ENCODE measurements at regions of chr6 and their contacts with region 1.

Region 1: DNA sequence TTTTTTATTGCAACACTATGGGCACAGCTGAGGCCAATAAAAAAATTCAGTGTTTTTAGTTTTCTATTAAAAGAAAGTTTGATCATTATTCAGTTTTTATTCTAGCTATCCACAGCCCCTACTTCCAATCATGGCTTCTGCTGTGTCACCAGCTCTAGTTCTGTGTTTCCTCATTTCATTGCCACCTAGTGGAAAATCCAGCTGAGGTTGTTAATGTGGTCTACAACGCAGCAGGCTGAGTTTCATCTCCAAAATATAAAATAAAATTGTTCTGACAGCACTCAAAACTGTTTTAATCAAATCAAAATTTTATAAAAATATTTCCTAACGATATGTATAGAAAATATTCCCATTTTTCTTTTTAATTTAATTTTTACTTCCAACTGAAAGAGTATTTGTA is 13.6 kb downstream of the COL9A1 start:
- DNase-seq: no peak
- ATAC-seq: peak; percentile 75
- H3K4me3 ChIP-seq: no peak overlapping the region
- H3K27ac ChIP-seq: no peak overlapping the region
- H3K4me1 ChIP-seq: no peaks in the 10 kb centered on the region
- H3K27me3 ChIP-seq: peaks cover 14% of the 10 kb centered on the region; the same call in 1 of the 2 replicates
- CTCF ChIP-seq: peak; percentile 29; the same call in 1 of the 2 replicates

Region 2: GRCh38 chr6:70221025-70221714 is 68.1 kb before region 1 on chr6:
- CTCF ChIA-PET with region 1: interaction called, 18 read pairs
- POLR2A ChIA-PET with region 1: no interaction called
- intact Hi-C with region 1: loop called (anchors 1 kb)
- DNase-seq: peak; percentile 36
- ATAC-seq: no peak
- H3K4me3 ChIP-seq: no peak overlapping the region
- H3K27ac ChIP-seq: no peak overlapping the region
- H3K4me1 ChIP-seq: no peaks in the 10 kb centered on the region
- H3K27me3 ChIP-seq: peaks cover 15% of the 10 kb centered on the region
- CTCF ChIP-seq: peak; percentile 55

Region 3: GRCh38 chr6:70270287-70271005 is 18.9 kb before region 1 on chr6:
- CTCF ChIA-PET with region 1: no interaction called
- POLR2A ChIA-PET with region 1: no interaction called
- intact Hi-C with region 1: no loop called
- DNase-seq: peak; percentile 38
- ATAC-seq: peak; percentile 71
- H3K4me3 ChIP-seq: no peak overlapping the region
- H3K27ac ChIP-seq: no peak overlapping the region
- H3K4me1 ChIP-seq: no peaks in the 10 kb centered on the region
- H3K27me3 ChIP-seq: 0 out of 2 replicates have a peak, but pooled peaks cover 7% of the 10 kb centered on the region
- CTCF ChIP-seq: no peak